ENCODE measurements at regions of chr2 and their contacts with region 1.

Region 1: GRCh38 chr2:64330281-64331113 is 123.5 kb upstream of the LGALSL start:
- DNase-seq: peak; percentile 61 to 80 (median 73)
- ATAC-seq: peak; percentile 54
- H3K4me3 ChIP-seq: no peak overlapping the region
- H3K4me3 Mint-ChIP-seq: peak overlapping the region in 9 of 10 donors; percentile 53 to 86 (median 68)
- H3K27ac ChIP-seq: no peak overlapping the region
- H3K27ac Mint-ChIP-seq: peak overlapping the region in 8 of 9 donors; percentile 9 to 94 (median 84)
- H3K4me1 ChIP-seq: peaks cover 27 to 29% of the 10 kb centered on the region in 2 donors
- H3K4me1 Mint-ChIP-seq: peaks cover 17 to 52% (median 36%) of the 10 kb centered on the region in 7 donors
- H3K27me3 ChIP-seq: no peaks in the 10 kb centered on the region
- H3K27me3 Mint-ChIP-seq: peaks cover 0 to 3% (median 0%) of the 10 kb centered on the region in 5 donors

Region 2: DNA sequence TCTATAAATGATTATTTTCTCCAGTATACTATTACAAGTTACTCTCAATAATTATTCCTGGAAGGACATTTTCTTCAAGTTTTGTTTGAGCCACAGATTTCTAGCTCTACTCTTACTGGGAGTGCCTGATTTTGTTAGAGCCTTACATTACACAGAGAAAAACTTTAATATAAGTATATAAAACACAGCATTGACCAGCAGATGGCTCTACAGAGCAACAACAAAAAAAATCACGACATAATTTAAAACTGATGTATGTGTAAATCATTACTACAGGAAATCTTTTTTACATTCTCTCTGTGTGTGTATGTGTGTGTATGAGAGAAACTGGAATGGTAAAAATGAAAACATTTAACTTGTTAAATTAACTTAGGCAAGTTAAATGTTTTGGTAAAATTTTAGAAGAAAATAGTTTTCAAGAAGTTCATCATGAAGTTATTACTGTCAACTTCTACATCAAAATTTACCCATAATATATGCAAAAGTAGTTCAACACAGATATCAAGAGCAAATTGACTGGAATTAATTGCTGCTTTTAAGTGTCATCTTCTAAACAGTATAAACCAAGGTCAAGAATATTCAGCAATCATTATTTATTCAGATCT is 638.4 kb before region 1 on chr2:
- CTCF ChIA-PET with region 1: interaction called, 4 read pairs
- POLR2A ChIA-PET with region 1: no interaction called
- intact Hi-C with region 1: loop called (anchors 1 to 5 kb)
- DNase-seq: peak in 7 of 9 donors; percentile 18 to 61 (median 51)
- ATAC-seq: peak; percentile 74
- H3K4me3 ChIP-seq: no peak overlapping the region
- H3K4me3 Mint-ChIP-seq: no peak overlapping the region
- H3K27ac ChIP-seq: no peak overlapping the region
- H3K27ac Mint-ChIP-seq: no peak overlapping the region
- H3K4me1 ChIP-seq: no peaks in the 10 kb centered on the region
- H3K4me1 Mint-ChIP-seq: peaks cover 0 to 4% (median 0%) of the 10 kb centered on the region in 7 donors
- H3K27me3 ChIP-seq: no peaks in the 10 kb centered on the region
- H3K27me3 Mint-ChIP-seq: peaks cover 0 to 11% (median 0%) of the 10 kb centered on the region in 5 donors

Region 3: GRCh38 chr2:64114063-64114911 is 216.2 kb before region 1 on chr2:
- CTCF ChIA-PET with region 1: no interaction called
- POLR2A ChIA-PET with region 1: no interaction called
- intact Hi-C with region 1: loop called in 1 of 2 experiments (anchors 1 kb)
- DNase-seq: peak in 5 of 9 donors; percentile 7 to 45 (median 34)
- ATAC-seq: peak; percentile 81
- H3K4me3 ChIP-seq: no peak overlapping the region
- H3K4me3 Mint-ChIP-seq: peak overlapping the region; percentile 12 to 75 (median 66)
- H3K27ac ChIP-seq: no peak overlapping the region
- H3K27ac Mint-ChIP-seq: peak overlapping the region; percentile 12 to 75 (median 60)
- H3K4me1 ChIP-seq: peaks cover 10 to 32% of the 10 kb centered on the region in 2 donors
- H3K4me1 Mint-ChIP-seq: peaks cover 55 to 94% (median 85%) of the 10 kb centered on the region in 7 donors
- H3K27me3 ChIP-seq: no peaks in the 10 kb centered on the region
- H3K27me3 Mint-ChIP-seq: no peaks in the 10 kb centered on the region

Region 4: GRCh38 chr2:64260817-64261216 is 69.7 kb before region 1 on chr2:
- CTCF ChIA-PET with region 1: interaction called, 7 read pairs
- POLR2A ChIA-PET with region 1: interaction called, 4 read pairs
- intact Hi-C with region 1: loop called in 1 of 2 experiments (anchors 2 kb)
- DNase-seq: peak in 7 of 9 donors; percentile 12 to 31 (median 26)
- ATAC-seq: peak; percentile 87
- H3K4me3 ChIP-seq: peak overlapping the region; percentile 31
- H3K4me3 Mint-ChIP-seq: peak overlapping the region; percentile 68 to 89 (median 73)
- H3K27ac ChIP-seq: peak overlapping the region; percentile 39
- H3K27ac Mint-ChIP-seq: peak overlapping the region; percentile 72 to 94 (median 87)
- H3K4me1 ChIP-seq: peaks cover 0 to 11% of the 10 kb centered on the region in 2 donors
- H3K4me1 Mint-ChIP-seq: peaks cover 7 to 13% (median 8%) of the 10 kb centered on the region in 7 donors
- H3K27me3 ChIP-seq: no peaks in the 10 kb centered on the region
- H3K27me3 Mint-ChIP-seq: peaks cover 0 to 2% (median 0%) of the 10 kb centered on the region in 5 donors

Region 5: GRCh38 chr2:64523666-64524603 is 193.4 kb after region 1 on chr2 and contains the start of gene AFTPH:
- CTCF ChIA-PET with region 1: interaction called, 49 read pairs
- POLR2A ChIA-PET with region 1: interaction called, 6 read pairs
- intact Hi-C with region 1: loop called (anchors 1 kb)
- DNase-seq: peak; percentile 96 to 100 (median 99)
- ATAC-seq: peak; percentile 98
- H3K4me3 ChIP-seq: peak within 1 kb of the TSS; percentile 99
- H3K4me3 Mint-ChIP-seq: peak within 1 kb of the TSS; percentile 94 to 100 (median 99)
- H3K27ac ChIP-seq: peak within 1 kb of the TSS; percentile 85
- H3K27ac Mint-ChIP-seq: peak within 1 kb of the TSS; percentile 93 to 99 (median 99)
- H3K4me1 ChIP-seq: peaks cover 22 to 25% of the 10 kb centered on the region in 2 donors
- H3K4me1 Mint-ChIP-seq: peaks cover 10 to 51% (median 43%) of the 10 kb centered on the region in 7 donors
- H3K27me3 ChIP-seq: no peaks in the 10 kb centered on the region
- H3K27me3 Mint-ChIP-seq: peaks cover 0 to 12% (median 0%) of the 10 kb centered on the region in 5 donors
- total RNA-seq, gene AFTPH: 25.2 to 46.2 (median 37.0) TPM

Region 6: DNA sequence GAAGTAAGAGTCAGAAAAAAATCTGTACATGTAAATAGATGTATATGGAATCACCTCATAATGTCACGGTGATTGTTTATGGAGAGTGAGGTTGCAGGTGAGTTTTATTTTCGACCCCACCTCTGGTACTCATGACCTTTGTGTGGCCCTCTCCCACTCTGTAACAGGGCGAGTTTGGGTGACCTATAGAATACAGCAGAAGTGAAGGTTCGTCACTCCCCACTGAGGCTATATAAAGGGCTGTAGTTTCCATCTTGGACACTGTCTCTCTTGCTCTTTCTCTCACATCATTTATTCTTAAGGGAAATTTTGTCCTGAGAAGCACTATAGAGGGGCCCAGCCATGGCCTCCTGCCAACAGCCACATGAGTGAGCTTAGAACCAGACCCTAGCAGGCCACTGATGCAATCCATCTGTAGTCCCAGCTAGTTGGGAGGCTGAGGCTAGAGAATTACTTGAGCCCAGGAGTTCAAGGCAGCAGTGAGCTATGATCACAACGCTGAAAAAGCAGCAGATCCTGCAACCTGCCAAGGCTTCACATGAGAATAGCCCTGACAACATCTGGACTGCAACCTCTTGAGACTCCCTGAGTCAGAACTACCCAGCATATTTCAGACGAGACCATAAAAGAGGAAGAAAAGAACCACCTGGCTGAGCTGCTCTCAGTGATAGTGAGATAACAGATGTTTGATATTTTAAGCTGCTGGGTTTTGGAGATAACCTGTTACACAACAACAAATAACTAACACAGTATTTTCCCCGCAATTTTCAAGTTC is 584.4 kb after region 1 on chr2:
- CTCF ChIA-PET with region 1: interaction called, 5 read pairs
- POLR2A ChIA-PET with region 1: no interaction called
- intact Hi-C with region 1: loop called in 1 of 2 experiments (anchors 1 kb)
- DNase-seq: no peak
- ATAC-seq: peak; percentile 51
- H3K4me3 ChIP-seq: no peak overlapping the region
- H3K4me3 Mint-ChIP-seq: no peak overlapping the region
- H3K27ac ChIP-seq: no peak overlapping the region
- H3K27ac Mint-ChIP-seq: peak overlapping the region in 1 of 9 donors; percentile 34
- H3K4me1 ChIP-seq: peaks cover 6 to 15% of the 10 kb centered on the region in 2 donors
- H3K4me1 Mint-ChIP-seq: peaks cover 6 to 33% (median 20%) of the 10 kb centered on the region in 7 donors
- H3K27me3 ChIP-seq: no peaks in the 10 kb centered on the region
- H3K27me3 Mint-ChIP-seq: no peaks in the 10 kb centered on the region

Region 7: GRCh38 chr2:65015731-65016130 is 685.2 kb after region 1 on chr2:
- CTCF ChIA-PET with region 1: no interaction called
- POLR2A ChIA-PET with region 1: no interaction called
- intact Hi-C with region 1: no loop called
- DNase-seq: no peak
- ATAC-seq: no peak
- H3K4me3 ChIP-seq: no peak overlapping the region
- H3K4me3 Mint-ChIP-seq: no peak overlapping the region
- H3K27ac ChIP-seq: no peak overlapping the region
- H3K27ac Mint-ChIP-seq: no peak overlapping the region
- H3K4me1 ChIP-seq: no peaks in the 10 kb centered on the region
- H3K4me1 Mint-ChIP-seq: peaks cover 0 to 24% (median 10%) of the 10 kb centered on the region in 7 donors
- H3K27me3 ChIP-seq: no peaks in the 10 kb centered on the region
- H3K27me3 Mint-ChIP-seq: no peaks in the 10 kb centered on the region